ENCODE measurements at regions of chr12 and their contacts with region 1.

Region 1: GRCh38 chr12:65948320-65949008 is 124.2 kb downstream of the HMGA2 start:
- DNase-seq: peak; percentile 98
- ATAC-seq: peak; percentile 60
- H3K4me3 ChIP-seq: peak overlapping the region; percentile 11; the same call in 1 of the 2 replicates
- H3K27ac ChIP-seq: peak overlapping the region; percentile 98
- H3K4me1 ChIP-seq: peaks cover 86% of the 10 kb centered on the region
- H3K27me3 ChIP-seq: no peaks in the 10 kb centered on the region
- CTCF ChIP-seq: no peak

Region 2: GRCh38 chr12:65968359-65968758 is 19.9 kb after region 1 on chr12:
- CTCF ChIA-PET with region 1: no interaction called
- POLR2A ChIA-PET with region 1: interaction called, 24 read pairs
- intact Hi-C with region 1: no loop called
- DNase-seq: no peak
- ATAC-seq: peak; percentile 16
- H3K4me3 ChIP-seq: no peak overlapping the region
- H3K27ac ChIP-seq: no peak overlapping the region
- H3K4me1 ChIP-seq: peaks cover 8% of the 10 kb centered on the region; the same call in 1 of the 2 replicates
- H3K27me3 ChIP-seq: no peaks in the 10 kb centered on the region
- CTCF ChIP-seq: no peak

Measured in PC-3 (cell line).